Caco-2 (cell line): ENCODE measurements at regions of chr6 and their contacts with region 1.

Region 1: GRCh38 chr6:70686548-70687133 is 19.0 kb downstream of the SMAP1 start:
- DNase-seq: no peak
- H3K4me3 ChIP-seq: no peak overlapping the region
- H3K4me3 Mint-ChIP-seq: no peak overlapping the region
- H3K27ac Mint-ChIP-seq: no peak overlapping the region
- H3K4me1 ChIP-seq: no peaks in the 10 kb centered on the region
- H3K4me1 Mint-ChIP-seq: peaks cover 20% of the 10 kb centered on the region
- H3K27me3 ChIP-seq: no peaks in the 10 kb centered on the region
- H3K27me3 Mint-ChIP-seq: no peaks in the 10 kb centered on the region
- CTCF ChIP-seq: peak; percentile 49

Region 2: DNA sequence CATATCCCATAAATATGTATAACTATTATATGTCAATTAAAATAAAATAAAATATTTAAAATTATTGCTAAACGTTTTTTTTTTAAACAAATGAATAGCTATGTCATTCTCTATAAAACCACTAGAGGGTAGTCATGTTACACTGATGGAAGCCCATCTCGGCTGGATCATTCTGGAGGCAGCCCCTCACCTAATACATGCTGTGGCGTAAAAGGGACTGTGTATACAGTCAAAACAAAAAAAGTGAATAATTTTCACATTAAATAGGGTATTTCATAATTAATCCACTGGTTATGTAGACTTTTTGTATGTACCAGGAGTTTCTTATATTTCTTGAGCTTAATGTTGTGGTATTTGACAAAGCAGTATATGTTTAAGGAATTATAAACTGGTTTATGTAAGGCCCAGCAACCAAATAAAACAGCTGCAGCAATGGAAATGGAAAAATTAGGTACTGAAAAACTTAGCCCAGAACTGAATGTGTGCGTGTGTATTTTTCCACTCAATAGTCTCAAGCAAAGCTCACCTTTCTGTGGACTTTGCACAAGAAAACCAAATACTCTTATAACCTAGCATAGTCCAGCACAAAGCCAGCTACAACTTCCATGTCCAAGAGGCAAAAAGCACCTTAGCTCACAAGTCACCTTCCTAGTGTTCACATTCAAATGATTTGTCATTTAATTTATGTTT is 465.5 kb before region 1 on chr6:
- CTCF ChIA-PET with region 1: interaction called, 5 read pairs
- POLR2A ChIA-PET with region 1: no interaction called
- intact Hi-C with region 1: loop called (anchors 5 kb)
- DNase-seq: peak in 1 of 2 experiments; percentile 19
- H3K4me3 ChIP-seq: no peak overlapping the region
- H3K4me3 Mint-ChIP-seq: no peak overlapping the region
- H3K27ac Mint-ChIP-seq: no peak overlapping the region
- H3K4me1 ChIP-seq: no peaks in the 10 kb centered on the region
- H3K4me1 Mint-ChIP-seq: no peaks in the 10 kb centered on the region
- H3K27me3 ChIP-seq: no peaks in the 10 kb centered on the region
- H3K27me3 Mint-ChIP-seq: peaks cover 4% of the 10 kb centered on the region
- CTCF ChIP-seq: peak; percentile 60 to 74

Region 3: GRCh38 chr6:70520575-70520974 is 166.1 kb before region 1 on chr6:
- CTCF ChIA-PET with region 1: interaction called, 19 read pairs
- POLR2A ChIA-PET with region 1: no interaction called
- intact Hi-C with region 1: loop called (anchors 1 kb)
- DNase-seq: no peak
- H3K4me3 ChIP-seq: no peak overlapping the region
- H3K4me3 Mint-ChIP-seq: no peak overlapping the region
- H3K27ac Mint-ChIP-seq: no peak overlapping the region
- H3K4me1 ChIP-seq: no peaks in the 10 kb centered on the region
- H3K4me1 Mint-ChIP-seq: no peaks in the 10 kb centered on the region
- H3K27me3 ChIP-seq: no peaks in the 10 kb centered on the region
- H3K27me3 Mint-ChIP-seq: no peaks in the 10 kb centered on the region
- CTCF ChIP-seq: peak; percentile 23 to 33

Region 4: DNA sequence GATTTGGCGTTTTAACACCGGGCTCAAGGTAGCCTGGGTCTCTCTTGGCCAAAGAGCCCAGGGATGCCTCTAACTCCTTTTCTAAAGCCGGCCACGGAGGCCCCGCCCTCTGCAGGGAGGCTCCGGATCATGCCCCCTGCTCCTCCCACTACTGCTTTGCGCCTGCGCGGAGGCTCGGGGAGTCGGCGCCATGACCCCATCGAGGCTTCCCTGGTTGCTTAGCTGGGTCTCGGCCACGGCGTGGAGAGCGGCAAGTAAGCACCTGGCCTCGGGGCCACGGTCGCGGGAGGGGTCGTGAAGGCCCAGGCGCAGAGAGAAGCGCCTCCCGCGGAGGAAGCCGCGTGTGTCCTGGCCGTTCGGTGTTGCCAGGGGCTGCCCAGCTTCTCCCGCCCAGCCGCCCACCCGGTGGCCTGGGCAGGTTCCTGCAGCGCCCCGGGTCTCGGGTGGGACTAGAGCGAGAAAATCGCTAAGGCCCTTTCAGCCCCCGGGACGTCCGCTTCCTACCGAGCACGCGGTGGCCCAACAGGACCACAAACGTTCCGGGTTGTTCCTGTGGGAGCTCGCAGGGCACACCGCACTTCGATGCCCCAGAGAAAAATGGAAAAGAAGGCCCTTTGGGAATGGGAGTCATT is 119.8 kb before region 1 on chr6 and contains the start of gene SDHAF4:
- CTCF ChIA-PET with region 1: interaction called, 5 read pairs
- POLR2A ChIA-PET with region 1: no interaction called
- intact Hi-C with region 1: loop called (anchors 1 kb)
- DNase-seq: peak; percentile 94 to 96
- H3K4me3 ChIP-seq: peak within 1 kb of the TSS; percentile 90
- H3K4me3 Mint-ChIP-seq: peak within 1 kb of the TSS; percentile 84
- H3K27ac Mint-ChIP-seq: peak within 1 kb of the TSS; percentile 75
- H3K4me1 ChIP-seq: peaks cover 8% of the 10 kb centered on the region; the same call in 1 of the 2 replicates
- H3K4me1 Mint-ChIP-seq: no peaks in the 10 kb centered on the region
- H3K27me3 ChIP-seq: no peaks in the 10 kb centered on the region
- H3K27me3 Mint-ChIP-seq: no peaks in the 10 kb centered on the region
- CTCF ChIP-seq: no peak
- total RNA-seq, gene SDHAF4: 8.4 and 10.9 TPM in 2 replicates

Region 5: DNA sequence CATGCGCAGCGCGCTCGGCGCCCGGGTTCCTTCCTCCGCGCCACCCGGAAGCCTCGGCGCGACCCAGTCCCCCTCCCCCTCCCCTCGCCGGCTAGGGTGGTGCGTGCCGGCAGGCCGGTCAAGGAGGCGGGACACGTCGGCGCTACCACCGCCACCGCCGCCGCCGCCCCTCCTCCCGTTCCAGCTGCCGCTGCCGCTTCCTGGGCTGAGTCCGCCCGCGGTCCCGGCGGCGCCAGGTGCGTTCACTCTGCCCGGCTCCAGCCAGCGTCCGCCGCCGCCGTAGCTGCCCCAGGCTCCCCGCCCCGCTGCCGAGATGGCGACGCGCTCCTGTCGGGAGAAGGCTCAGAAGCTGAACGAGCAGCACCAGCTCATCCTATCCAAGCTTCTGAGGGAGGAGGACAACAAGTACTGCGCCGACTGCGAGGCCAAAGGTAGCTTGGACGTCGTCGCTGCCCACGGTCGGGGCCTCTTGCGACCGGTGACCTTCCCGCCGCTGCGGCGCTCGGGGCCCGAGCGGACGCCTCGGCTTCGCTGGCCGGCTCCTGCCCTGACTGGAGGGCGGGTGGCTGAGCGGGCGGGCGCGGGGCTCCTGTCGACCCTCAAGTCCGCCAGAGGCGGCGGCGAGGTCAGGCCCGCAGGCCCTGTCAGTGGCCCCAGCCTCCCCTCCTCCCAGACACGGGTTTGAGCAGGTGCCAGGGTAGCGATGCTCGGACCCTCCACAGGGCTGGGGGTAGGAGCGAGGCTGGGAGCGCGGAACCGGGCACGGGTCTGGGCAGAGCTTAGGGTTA is 18.7 kb before region 1 on chr6 and contains the start of gene SMAP1:
- CTCF ChIA-PET with region 1: interaction called, 12 read pairs
- POLR2A ChIA-PET with region 1: no interaction called
- intact Hi-C with region 1: loop called (anchors 1 kb)
- DNase-seq: peak; percentile 94 to 97
- H3K4me3 ChIP-seq: peak within 1 kb of the TSS; percentile 96
- H3K4me3 Mint-ChIP-seq: peak within 1 kb of the TSS; percentile 82
- H3K27ac Mint-ChIP-seq: peak within 1 kb of the TSS; percentile 74
- H3K4me1 ChIP-seq: peaks cover 14% of the 10 kb centered on the region
- H3K4me1 Mint-ChIP-seq: peaks cover 13% of the 10 kb centered on the region
- H3K27me3 ChIP-seq: no peaks in the 10 kb centered on the region
- H3K27me3 Mint-ChIP-seq: no peaks in the 10 kb centered on the region
- CTCF ChIP-seq: no peak
- total RNA-seq, gene SMAP1: 36.1 and 36.2 TPM in 2 replicates

Region 6: GRCh38 chr6:70717038-70717801 is 30.6 kb after region 1 on chr6:
- CTCF ChIA-PET with region 1: no interaction called
- POLR2A ChIA-PET with region 1: no interaction called
- intact Hi-C with region 1: no loop called
- DNase-seq: no peak
- H3K4me3 ChIP-seq: no peak overlapping the region
- H3K4me3 Mint-ChIP-seq: no peak overlapping the region
- H3K27ac Mint-ChIP-seq: no peak overlapping the region
- H3K4me1 ChIP-seq: no peaks in the 10 kb centered on the region
- H3K4me1 Mint-ChIP-seq: no peaks in the 10 kb centered on the region
- H3K27me3 ChIP-seq: no peaks in the 10 kb centered on the region
- H3K27me3 Mint-ChIP-seq: no peaks in the 10 kb centered on the region
- CTCF ChIP-seq: no peak